ENCODE measurements at regions of chr13 and their contacts with region 1.

Region 1: DNA sequence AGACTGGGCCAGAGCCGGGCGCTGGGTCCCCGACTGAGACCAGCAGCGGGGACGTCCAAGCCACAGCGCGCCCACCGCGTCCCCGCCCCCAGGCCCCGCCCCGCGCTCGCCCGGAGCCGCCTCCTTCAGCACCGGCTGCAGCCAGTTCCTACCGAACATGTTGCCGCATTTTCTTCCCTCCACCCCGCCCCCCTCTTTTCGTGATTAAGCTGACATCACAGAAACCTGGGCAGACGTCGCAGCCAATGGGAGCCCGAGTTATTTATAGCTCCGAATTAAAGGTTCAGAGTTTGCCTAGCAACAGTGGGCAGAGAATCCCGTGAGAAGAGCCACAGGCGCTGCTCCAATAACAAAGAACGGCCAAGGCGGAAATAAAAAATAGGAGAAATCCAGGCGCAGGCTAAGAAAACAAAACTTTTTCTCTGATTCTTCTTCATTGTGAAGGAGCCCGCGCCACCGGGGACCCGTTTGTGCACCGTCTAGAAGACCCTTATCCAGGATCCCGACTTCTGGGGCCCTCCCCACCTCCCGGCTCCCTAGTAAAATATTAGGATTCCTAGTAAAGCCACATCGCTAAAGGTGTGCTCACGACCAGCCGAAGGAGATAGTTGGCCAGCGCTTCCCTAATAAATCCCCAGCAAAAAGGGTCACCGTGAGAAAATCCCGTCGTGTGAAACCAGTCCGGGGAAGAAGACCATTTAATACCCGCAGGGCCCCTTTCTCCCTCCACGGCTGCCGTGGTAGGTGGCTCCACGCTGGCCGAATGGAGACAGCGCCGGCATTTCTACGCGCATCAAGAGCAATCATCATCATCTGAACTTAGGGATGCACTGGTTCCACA is 61.7 kb downstream of the SERP2 start:
- DNase-seq: peak; percentile 93
- ATAC-seq: peak; percentile 41
- H3K4me3 ChIP-seq: peak overlapping the region; percentile 100
- H3K27ac ChIP-seq: peak overlapping the region; percentile 90
- H3K4me1 ChIP-seq: peaks cover 22% of the 10 kb centered on the region
- H3K27me3 ChIP-seq: no peaks in the 10 kb centered on the region
- CTCF ChIP-seq: no peak

Region 2: DNA sequence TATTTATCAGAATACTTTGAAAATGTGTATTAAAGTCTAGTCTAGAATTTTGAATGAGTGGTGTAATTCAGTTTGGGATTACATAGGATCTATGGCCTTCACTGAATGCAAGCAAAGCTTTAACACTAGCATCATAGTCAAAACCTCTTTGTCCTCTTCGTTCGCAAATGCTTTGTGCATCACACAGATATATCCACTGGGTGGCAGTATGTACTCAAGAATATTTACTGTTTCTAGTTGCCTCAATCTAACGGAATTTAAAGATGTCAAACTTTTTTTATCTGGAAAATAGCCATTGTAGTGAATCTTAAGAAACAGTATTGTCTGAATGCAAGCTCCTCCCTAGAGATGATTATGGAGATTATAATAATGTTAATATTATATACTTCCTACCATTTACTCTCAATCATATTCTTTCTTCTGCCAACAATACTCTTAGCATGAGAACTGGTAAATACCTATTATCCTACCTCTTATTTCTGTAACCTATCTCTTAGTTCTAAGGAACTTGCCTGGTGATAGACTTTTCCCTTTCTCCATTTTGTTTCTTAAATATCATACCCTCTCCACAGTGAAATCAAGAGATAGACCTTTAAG is 529.8 kb before region 1 on chr13:
- CTCF ChIA-PET with region 1: interaction called, 7 read pairs
- POLR2A ChIA-PET with region 1: interaction called, 4 read pairs
- intact Hi-C with region 1: loop called (anchors 1 kb)
- DNase-seq: peak; percentile 80
- ATAC-seq: peak; percentile 59
- H3K4me3 ChIP-seq: no peak overlapping the region
- H3K27ac ChIP-seq: no peak overlapping the region
- H3K4me1 ChIP-seq: peaks cover 20% of the 10 kb centered on the region
- H3K27me3 ChIP-seq: no peaks in the 10 kb centered on the region
- CTCF ChIP-seq: peak; percentile 76

Region 3: DNA sequence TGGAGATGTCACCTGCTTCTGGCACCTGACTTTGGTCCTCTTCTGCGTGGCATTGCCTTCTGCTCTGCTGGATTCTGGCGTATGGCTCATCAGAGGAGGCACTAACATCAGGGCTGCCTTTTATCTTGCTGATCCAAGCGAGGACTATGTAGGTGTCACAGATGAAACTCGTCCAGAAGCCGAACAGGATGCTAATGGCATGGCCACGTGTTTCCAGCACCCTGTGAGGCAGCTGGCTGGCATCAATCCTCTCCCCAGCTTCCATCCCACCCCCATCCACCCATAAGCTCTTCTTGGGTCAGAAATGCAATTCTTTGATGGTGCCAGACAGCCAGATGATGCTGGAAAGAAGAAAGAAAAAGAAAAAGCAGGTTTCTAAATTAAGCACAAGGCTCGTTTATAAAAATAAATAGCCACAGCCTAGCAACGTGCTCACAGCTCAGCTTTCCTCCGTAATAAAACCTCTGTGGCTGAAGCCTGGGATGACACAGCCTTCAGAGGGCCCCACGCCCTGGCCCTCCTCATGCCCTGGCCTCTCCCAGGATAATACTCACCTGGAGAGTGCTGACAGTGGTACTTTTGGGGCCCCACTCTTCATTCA is 274.7 kb before region 1 on chr13:
- CTCF ChIA-PET with region 1: no interaction called
- POLR2A ChIA-PET with region 1: interaction called, 7 read pairs
- intact Hi-C with region 1: loop called (anchors 1 kb)
- DNase-seq: peak; percentile 63
- ATAC-seq: peak; percentile 64
- H3K4me3 ChIP-seq: no peak overlapping the region
- H3K27ac ChIP-seq: peak overlapping the region; percentile 100
- H3K4me1 ChIP-seq: peaks cover 34% of the 10 kb centered on the region
- H3K27me3 ChIP-seq: no peaks in the 10 kb centered on the region
- CTCF ChIP-seq: no peak

Region 4: DNA sequence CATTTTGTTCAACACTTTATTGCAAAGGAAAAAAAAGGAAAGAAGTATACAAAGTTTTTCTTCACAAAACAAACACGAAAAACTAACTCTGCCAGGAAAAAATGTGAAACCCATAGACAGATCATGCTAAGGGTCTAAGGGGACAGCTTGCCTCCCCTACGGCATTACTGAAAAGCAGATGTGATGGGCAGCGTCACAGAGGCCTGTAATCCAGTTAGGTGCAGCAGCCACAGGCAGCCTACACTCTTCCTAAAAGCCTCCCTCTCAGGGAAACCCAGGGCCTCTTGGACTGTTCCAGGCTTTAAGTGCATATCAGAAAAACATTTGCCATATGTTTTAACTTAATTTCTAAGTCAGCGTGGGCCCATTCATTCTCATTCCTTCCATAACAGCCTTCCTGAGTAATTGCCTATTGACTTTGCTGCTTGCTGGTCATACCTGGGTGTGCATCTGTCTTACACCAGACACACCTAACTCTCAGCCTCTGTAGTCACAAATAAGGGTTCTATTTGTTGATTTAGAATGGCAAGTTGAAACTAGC is 197.4 kb before region 1 on chr13:
- CTCF ChIA-PET with region 1: no interaction called
- POLR2A ChIA-PET with region 1: interaction called, 18 read pairs
- intact Hi-C with region 1: loop called (anchors 1 kb)
- DNase-seq: no peak
- ATAC-seq: no peak
- H3K4me3 ChIP-seq: no peak overlapping the region
- H3K27ac ChIP-seq: peak overlapping the region; percentile 78
- H3K4me1 ChIP-seq: peaks cover 21% of the 10 kb centered on the region
- H3K27me3 ChIP-seq: no peaks in the 10 kb centered on the region
- CTCF ChIP-seq: no peak

Region 5: GRCh38 chr13:44287958-44288357 is 147.4 kb before region 1 on chr13:
- CTCF ChIA-PET with region 1: no interaction called
- POLR2A ChIA-PET with region 1: no interaction called
- intact Hi-C with region 1: no loop called
- DNase-seq: no peak
- ATAC-seq: no peak
- H3K4me3 ChIP-seq: no peak overlapping the region
- H3K27ac ChIP-seq: no peak overlapping the region
- H3K4me1 ChIP-seq: no peaks in the 10 kb centered on the region
- H3K27me3 ChIP-seq: no peaks in the 10 kb centered on the region
- CTCF ChIP-seq: no peak

Region 6: DNA sequence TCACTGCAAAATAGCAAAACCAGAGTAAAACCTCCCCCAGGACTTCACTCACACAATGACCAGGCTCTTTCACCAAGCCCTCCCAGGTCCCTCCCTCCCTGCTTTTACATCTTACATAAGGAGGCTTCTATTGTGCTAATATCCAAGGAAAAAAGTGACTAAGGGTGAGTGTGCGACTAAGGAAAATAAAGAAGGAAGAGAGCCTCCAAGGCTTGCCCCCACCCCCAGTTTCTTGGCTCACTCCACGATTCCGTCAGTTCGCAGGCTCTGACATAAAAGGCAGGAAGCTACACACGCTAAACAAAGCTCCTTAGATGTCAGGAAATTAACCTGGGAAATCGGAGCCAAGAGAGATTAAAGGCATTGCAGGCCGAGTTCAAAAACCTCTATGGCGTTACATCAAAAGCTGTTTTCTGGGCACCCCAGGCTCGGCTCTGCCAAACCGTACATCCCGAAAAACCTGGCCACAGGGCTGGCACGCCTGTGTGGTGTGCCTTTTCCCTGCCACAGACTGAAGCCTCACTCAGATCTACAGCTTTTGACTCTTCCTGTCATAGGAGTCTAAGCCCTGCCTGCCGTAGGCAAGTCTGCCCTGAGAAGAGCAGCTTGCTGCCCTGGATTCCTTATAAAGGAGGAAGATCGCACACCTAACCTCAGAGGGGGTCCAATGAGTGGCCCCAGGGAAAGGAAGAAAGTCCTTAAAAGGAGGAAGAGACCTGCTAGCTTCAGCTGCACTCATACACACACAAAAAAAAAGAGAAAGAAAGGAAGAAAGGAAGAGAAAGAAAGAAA is 128.8 kb before region 1 on chr13:
- CTCF ChIA-PET with region 1: interaction called, 3 read pairs
- POLR2A ChIA-PET with region 1: interaction called, 33 read pairs
- intact Hi-C with region 1: no loop called
- DNase-seq: peak; percentile 95
- ATAC-seq: peak; percentile 73
- H3K4me3 ChIP-seq: peak overlapping the region; percentile 47
- H3K27ac ChIP-seq: peak overlapping the region; percentile 100
- H3K4me1 ChIP-seq: peaks cover 73% of the 10 kb centered on the region
- H3K27me3 ChIP-seq: no peaks in the 10 kb centered on the region
- CTCF ChIP-seq: no peak

Region 7: DNA sequence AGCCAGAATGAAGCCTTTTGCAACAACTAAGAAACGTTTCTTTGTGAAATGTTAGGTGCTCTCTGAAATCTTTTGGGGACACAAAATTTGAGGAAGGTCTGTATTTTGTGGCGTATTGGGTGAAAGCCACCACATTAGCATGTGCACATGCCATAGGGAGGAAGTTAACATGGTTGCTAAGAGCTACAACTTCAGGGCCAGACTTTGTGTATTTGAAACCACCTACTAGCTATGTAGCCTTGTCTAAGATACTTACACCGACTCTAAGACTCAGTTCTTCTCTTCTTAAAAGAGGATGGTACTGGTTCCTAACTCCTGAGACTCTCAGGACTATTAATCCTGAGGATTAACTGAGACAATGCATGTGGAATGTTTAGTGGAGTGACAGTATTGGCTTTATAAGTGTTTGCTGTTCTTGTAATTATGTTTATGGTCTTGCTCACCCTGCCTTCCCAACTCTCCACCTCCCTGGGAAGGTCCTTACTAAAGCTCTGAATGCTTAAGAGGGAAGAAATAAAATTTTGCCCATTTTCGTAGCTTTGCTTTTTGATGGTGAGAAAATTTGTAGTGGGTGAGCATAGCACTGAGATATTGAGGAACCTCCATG is 46.2 kb before region 1 on chr13:
- CTCF ChIA-PET with region 1: no interaction called
- POLR2A ChIA-PET with region 1: interaction called, 18 read pairs
- intact Hi-C with region 1: no loop called
- DNase-seq: no peak
- ATAC-seq: peak; percentile 75
- H3K4me3 ChIP-seq: no peak overlapping the region
- H3K27ac ChIP-seq: no peak overlapping the region
- H3K4me1 ChIP-seq: no peaks in the 10 kb centered on the region
- H3K27me3 ChIP-seq: no peaks in the 10 kb centered on the region
- CTCF ChIP-seq: no peak

Region 8: GRCh38 chr13:44523146-44524015 is 88.0 kb after region 1 on chr13:
- CTCF ChIA-PET with region 1: no interaction called
- POLR2A ChIA-PET with region 1: no interaction called
- intact Hi-C with region 1: no loop called
- DNase-seq: peak; percentile 72
- ATAC-seq: peak; percentile 96
- H3K4me3 ChIP-seq: peak overlapping the region; percentile 59
- H3K27ac ChIP-seq: peak overlapping the region; percentile 78
- H3K4me1 ChIP-seq: peaks cover 24% of the 10 kb centered on the region
- H3K27me3 ChIP-seq: no peaks in the 10 kb centered on the region
- CTCF ChIP-seq: no peak

Region 9: GRCh38 chr13:44605275-44605674 is 169.9 kb after region 1 on chr13:
- CTCF ChIA-PET with region 1: no interaction called
- POLR2A ChIA-PET with region 1: no interaction called
- intact Hi-C with region 1: no loop called
- DNase-seq: no peak
- ATAC-seq: no peak
- H3K4me3 ChIP-seq: no peak overlapping the region
- H3K27ac ChIP-seq: no peak overlapping the region
- H3K4me1 ChIP-seq: no peaks in the 10 kb centered on the region
- H3K27me3 ChIP-seq: no peaks in the 10 kb centered on the region
- CTCF ChIP-seq: no peak

Measured in PC-3 (cell line).